Upper lobe of right lung (tissue), 1 donor: ENCODE measurements at regions of chr10 and their contacts with region 1.

Region 1: DNA sequence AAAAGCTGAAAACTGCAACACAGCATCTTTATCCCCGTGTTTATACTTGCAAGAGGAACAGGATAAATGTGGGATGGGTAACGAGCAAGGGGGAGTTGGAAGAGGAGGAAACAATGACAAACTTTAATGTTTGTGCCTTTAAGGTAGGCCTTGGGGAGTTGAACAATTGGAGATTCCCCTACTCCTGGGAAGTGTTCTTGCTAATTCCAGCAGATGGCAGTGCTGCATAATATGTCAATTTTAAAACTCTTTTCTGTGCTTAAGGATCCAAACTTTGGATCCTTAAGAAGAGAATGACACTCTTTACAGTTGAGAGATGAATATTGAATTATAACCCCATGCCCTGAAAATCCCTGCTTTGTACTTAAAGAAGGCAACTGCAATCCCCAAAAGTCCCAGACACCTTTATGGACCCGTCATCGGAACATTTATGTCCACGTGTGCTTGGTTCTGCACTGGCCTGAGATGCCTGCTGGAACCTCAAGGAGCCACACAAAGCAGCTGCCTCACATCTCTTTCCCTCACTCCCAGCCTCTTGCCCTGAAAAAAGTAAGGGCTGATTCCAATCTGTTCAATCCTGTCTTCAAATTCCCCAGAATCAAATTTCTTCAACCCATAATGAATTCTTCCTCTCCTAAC is 12.0 kb downstream of the IFIT5 start:
- DNase-seq: no peak
- ATAC-seq: peak; percentile 89
- H3K4me3 ChIP-seq: no peak overlapping the region
- H3K27ac ChIP-seq: no peak overlapping the region
- H3K4me1 ChIP-seq: no peaks in the 10 kb centered on the region
- H3K27me3 ChIP-seq: no peaks in the 10 kb centered on the region
- CTCF ChIP-seq: peak; percentile 81

Region 2: DNA sequence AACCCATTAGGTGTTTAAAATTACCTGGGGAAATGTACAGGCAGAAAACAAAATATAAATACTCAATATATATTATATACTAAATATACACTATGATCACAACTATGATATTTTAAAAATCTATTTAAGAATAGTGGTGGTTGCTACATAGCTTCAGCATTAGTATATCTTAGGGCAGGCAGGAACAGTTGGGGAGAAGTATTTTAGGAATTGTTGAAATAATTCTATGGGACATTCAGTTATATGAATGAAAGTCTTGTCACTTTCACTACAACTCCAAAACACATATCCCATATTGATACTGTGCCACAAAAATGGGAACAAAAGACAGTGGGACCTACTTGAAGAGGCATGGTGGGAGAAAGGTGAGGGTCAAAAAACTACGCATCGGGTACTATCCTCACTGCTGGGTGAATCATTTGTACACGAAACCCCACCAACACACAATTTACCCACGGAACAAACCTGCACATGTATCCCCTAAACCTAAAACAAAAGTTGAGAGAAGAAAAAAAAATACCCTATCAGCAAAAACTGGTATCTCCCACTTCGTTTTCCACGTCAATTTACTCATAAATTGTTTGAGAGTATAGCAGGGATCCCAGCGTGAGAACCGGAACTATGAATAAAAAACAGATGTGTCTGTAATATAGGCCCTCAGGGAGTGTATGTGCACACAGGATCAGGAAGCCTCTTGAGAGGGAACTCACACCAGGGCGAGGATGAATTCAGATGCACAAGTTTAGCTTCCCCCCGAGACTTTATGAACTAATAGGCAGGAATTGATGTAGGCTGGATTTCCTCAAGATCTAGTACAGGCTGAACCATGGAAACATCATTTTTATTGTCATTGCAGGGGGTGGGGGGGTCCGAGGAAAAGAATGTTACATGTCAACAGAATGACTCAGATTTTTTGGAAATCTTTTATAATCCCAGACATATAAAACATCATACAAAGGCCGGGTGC is 92.8 kb after region 1 on chr10:
- intact Hi-C with region 1: no loop called
- DNase-seq: no peak
- ATAC-seq: no peak
- H3K4me3 ChIP-seq: no peak overlapping the region
- H3K27ac ChIP-seq: no peak overlapping the region
- H3K4me1 ChIP-seq: no peaks in the 10 kb centered on the region
- H3K27me3 ChIP-seq: no peaks in the 10 kb centered on the region
- CTCF ChIP-seq: no peak

Region 3: GRCh38 chr10:89563861-89564478 is 137.6 kb after region 1 on chr10:
- intact Hi-C with region 1: loop called (anchors 5 kb)
- DNase-seq: no peak
- ATAC-seq: peak; percentile 77
- H3K4me3 ChIP-seq: no peak overlapping the region
- H3K27ac ChIP-seq: no peak overlapping the region
- H3K4me1 ChIP-seq: no peaks in the 10 kb centered on the region
- H3K27me3 ChIP-seq: no peaks in the 10 kb centered on the region
- CTCF ChIP-seq: peak; percentile 77